ENCODE measurements at regions of chr7 and their contacts with region 1.

Region 1: DNA sequence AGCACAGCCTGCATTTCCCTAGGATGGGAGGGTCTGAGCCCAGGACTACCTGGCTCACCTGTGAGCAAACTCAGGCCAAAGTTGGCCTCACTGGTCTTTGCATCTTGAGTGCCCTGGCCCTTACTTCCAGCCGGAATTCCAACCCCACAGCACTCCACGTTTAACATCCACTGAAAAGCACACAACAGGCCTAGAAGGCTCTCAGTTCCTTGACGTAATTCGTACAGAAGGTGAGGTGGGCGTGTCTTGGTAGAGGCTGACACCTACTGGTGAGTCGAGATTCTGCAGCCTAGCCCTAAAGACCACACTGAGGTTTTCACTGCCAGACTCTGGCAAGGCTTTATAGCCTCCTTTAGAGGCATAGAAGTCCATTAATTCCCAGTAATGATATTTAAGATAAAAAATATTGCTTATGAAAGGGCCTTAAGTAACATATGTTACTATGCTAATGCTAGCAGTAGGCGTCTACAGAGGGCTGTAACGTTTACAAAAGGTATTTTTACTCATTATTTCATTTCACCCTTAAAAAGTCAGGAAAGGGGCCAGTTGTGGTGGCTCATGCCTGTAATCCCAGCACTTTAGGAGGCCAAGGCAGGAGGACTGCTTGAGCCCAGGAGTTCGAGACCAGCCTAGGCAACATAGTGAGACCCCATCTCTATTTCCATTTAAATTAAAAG is 95.8 kb downstream of the HIP1 start:
- H3K4me3 Mint-ChIP-seq: no peak overlapping the region
- H3K27ac Mint-ChIP-seq: peak overlapping the region; percentile 73
- H3K4me1 Mint-ChIP-seq: peaks cover 21% of the 10 kb centered on the region
- H3K27me3 Mint-ChIP-seq: peaks cover 1% of the 10 kb centered on the region

Region 2: GRCh38 chr7:75599244-75599781 is 43.6 kb before region 1 on chr7:
- intact Hi-C with region 1: loop called (anchors 10 kb)
- H3K4me3 Mint-ChIP-seq: no peak overlapping the region
- H3K27ac Mint-ChIP-seq: no peak overlapping the region
- H3K4me1 Mint-ChIP-seq: peaks cover 12% of the 10 kb centered on the region
- H3K27me3 Mint-ChIP-seq: no peaks in the 10 kb centered on the region

Region 3: DNA sequence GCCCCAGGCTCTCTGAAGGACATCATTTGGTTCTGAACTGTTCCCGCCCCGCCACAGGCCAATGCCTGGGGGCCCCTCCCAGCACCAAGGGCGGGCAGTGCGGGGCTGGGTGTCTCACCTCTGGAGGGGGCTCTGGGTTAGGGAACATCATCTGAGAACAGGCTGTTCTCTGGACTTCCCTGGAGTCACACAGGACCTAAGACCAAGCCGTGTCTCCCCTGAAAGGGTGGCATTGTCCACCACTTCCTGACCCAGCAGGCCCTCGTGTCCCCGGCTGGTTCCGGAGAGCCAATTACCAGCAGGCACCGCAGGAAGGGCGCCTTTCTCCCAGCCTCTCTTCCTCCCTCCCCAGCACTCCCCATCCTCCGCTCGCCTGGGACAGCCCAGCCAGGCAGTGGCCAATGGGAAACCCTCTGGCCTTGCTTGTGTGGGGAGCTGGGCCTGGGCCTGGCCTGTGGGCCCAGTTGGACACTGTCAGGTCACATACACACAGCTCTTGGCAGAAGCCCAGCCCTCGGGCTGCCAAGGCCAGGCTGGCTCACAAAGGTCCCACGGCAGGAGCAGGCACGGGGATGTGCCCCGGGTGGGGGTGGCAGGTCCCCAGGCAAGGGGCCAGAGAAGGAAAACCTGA is 31.3 kb before region 1 on chr7:
- intact Hi-C with region 1: loop called (anchors 1 kb)
- H3K4me3 Mint-ChIP-seq: peak overlapping the region; percentile 34
- H3K27ac Mint-ChIP-seq: peak overlapping the region; percentile 79
- H3K4me1 Mint-ChIP-seq: peaks cover 68% of the 10 kb centered on the region
- H3K27me3 Mint-ChIP-seq: no peaks in the 10 kb centered on the region

Region 4: GRCh38 chr7:75617634-75618234 is 25.2 kb before region 1 on chr7:
- intact Hi-C with region 1: loop called (anchors 2 kb)
- H3K4me3 Mint-ChIP-seq: peak overlapping the region; percentile 67
- H3K27ac Mint-ChIP-seq: peak overlapping the region; percentile 91
- H3K4me1 Mint-ChIP-seq: peaks cover 99% of the 10 kb centered on the region
- H3K27me3 Mint-ChIP-seq: no peaks in the 10 kb centered on the region

Region 5: DNA sequence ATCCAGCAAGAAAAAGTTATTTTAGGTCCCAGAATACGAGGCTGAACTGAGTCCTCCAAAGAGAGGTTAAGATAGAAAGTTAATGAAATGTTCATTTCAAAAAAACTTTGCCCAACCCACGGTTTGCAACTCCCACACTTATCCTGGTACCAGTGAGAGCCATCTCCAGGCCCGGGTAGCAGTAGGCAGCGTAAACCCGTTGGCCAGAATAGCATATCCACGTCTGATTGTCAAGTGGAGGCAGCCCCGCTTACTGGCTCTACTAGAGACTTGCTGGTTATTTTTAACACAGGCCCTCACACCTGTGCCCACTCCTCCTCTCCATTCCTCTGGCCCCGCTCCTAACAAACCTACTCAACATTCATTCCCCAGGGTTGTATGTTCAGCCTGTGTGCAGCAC is 13.9 kb before region 1 on chr7:
- intact Hi-C with region 1: no loop called
- H3K4me3 Mint-ChIP-seq: no peak overlapping the region
- H3K27ac Mint-ChIP-seq: no peak overlapping the region
- H3K4me1 Mint-ChIP-seq: peaks cover 60% of the 10 kb centered on the region
- H3K27me3 Mint-ChIP-seq: no peaks in the 10 kb centered on the region

Region 6: GRCh38 chr7:75696263-75697037 is 53.5 kb after region 1 on chr7:
- intact Hi-C with region 1: no loop called
- H3K4me3 Mint-ChIP-seq: no peak overlapping the region
- H3K27ac Mint-ChIP-seq: no peak overlapping the region
- H3K4me1 Mint-ChIP-seq: peaks cover 5% of the 10 kb centered on the region
- H3K27me3 Mint-ChIP-seq: no peaks in the 10 kb centered on the region

Region 7: DNA sequence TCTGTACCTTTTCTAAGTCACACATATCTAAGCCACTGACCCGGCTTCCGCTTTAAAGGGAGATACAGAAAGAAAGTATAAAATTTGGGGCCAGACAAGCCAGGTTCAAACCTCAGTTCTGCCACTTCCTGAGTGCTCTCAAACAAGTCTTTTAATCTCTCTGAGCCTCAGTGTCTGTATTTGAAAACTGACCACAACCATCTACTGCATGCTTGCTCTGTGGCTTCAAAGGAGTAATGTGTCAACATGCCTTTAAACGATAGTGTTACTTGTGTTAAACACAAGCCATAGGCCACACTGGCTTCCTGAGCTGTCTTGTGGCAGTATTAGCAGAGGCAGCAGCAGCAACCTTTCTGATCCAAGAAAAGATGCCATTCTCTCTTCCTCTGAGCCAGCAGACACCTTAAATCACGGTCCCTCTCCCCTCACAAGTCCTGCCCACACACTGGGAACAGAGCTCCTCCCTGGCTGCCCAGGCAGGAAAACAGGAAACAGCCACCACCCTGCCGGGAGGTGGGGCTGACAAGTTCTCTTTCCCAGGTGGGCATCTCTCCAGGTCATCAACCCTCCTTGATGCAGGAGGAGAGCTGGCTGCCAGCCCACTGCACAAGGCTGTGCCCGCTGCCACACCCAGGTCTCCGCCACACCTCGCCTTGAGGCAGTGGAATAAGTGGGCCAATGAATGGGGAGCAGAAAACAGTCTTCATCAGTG is 85.1 kb after region 1 on chr7:
- intact Hi-C with region 1: no loop called
- H3K4me3 Mint-ChIP-seq: no peak overlapping the region
- H3K27ac Mint-ChIP-seq: no peak overlapping the region
- H3K4me1 Mint-ChIP-seq: peaks cover 52% of the 10 kb centered on the region
- H3K27me3 Mint-ChIP-seq: no peaks in the 10 kb centered on the region

Measured in dendritic cell treated with granulocyte-macrophage colony-stimulating factor and Interleukin-4, amounts not matched to agents 40 ng/mL and 50 ng/mL, for 4 days (primary cell).